ENCODE measurements at regions of chr16 and their contacts with region 1.

Region 1: GRCh38 chr16:2429034-2429770 is at the start of gene CCNF:
- DNase-seq: peak; percentile 98
- H3K4me3 ChIP-seq: peak within 1 kb of the TSS; percentile 70 to 93 (median 78)
- H3K27ac ChIP-seq: peak within 1 kb of the TSS; percentile 76 to 82 (median 80)
- H3K4me1 ChIP-seq: peaks cover 4 to 20% (median 18%) of the 10 kb centered on the region in 4 donors
- H3K27me3 ChIP-seq: no peaks in the 10 kb centered on the region
- CTCF ChIP-seq: no peak
- EP300 ChIP-seq: no peak
- POLR2A ChIP-seq: peak; percentile 20
- total RNA-seq, gene CCNF: 0.75 to 24.9 (median 2.3) TPM

Region 2: GRCh38 chr16:2340564-2341455 is 88.4 kb before region 1 on chr16 and contains the start of gene ABCA3:
- in situ Hi-C with region 1: no loop called
- intact Hi-C with region 1: loop called (anchors 5 kb)
- DNase-seq: peak; percentile 95
- H3K4me3 ChIP-seq: peak within 1 kb of the TSS; percentile 47 to 67 (median 62)
- H3K27ac ChIP-seq: peak within 1 kb of the TSS; percentile 8 to 78 (median 64)
- H3K4me1 ChIP-seq: peaks cover 0 to 23% (median 14%) of the 10 kb centered on the region in 4 donors
- H3K27me3 ChIP-seq: peaks cover 47% of the 10 kb centered on the region
- CTCF ChIP-seq: peak; percentile 98 to 100 (median 99)
- EP300 ChIP-seq: no peak
- POLR2A ChIP-seq: no peak
- total RNA-seq, gene ABCA3: 3.4 to 8.6 (median 3.7) TPM

Region 3: GRCh38 chr16:2398520-2398919 is 30.7 kb before region 1 on chr16:
- in situ Hi-C with region 1: no loop called
- intact Hi-C with region 1: no loop called
- DNase-seq: no peak
- H3K4me3 ChIP-seq: no peak overlapping the region
- H3K27ac ChIP-seq: no peak overlapping the region
- H3K4me1 ChIP-seq: no peaks in the 10 kb centered on the region
- H3K27me3 ChIP-seq: no peaks in the 10 kb centered on the region
- CTCF ChIP-seq: no peak
- EP300 ChIP-seq: no peak
- POLR2A ChIP-seq: no peak

Region 4: DNA sequence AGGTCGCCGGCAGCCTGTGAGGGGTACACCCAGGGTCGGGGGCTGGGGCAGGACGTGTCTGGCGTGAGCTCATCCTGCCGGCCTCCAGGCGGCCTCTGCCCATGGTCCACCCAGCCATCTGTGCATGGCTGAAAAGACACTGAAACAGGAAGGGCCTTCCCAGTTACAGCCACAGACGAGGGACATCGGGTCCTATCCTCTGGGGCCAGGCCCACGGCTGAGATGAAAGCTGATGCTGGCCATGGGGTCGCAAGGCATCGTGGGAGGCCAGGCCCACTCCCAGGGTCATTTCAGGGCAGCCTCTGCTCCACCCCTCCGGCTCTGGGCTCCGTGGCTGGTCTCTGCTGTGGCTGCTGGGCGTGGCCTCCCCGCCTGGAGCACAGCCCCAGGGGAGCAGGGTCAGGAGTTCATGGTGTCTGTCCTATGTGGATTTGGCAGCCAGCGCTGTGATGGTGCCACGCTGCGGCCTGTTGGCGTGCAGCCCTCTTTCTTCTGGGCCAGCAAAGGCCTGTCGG is 68.0 kb after region 1 on chr16:
- in situ Hi-C with region 1: loop called in 1 of 4 experiments (anchors 10 kb)
- intact Hi-C with region 1: no loop called
- DNase-seq: no peak
- H3K4me3 ChIP-seq: no peak overlapping the region
- H3K27ac ChIP-seq: no peak overlapping the region
- H3K4me1 ChIP-seq: peaks cover 6 to 29% (median 11%) of the 10 kb centered on the region in 4 donors
- H3K27me3 ChIP-seq: no peaks in the 10 kb centered on the region
- CTCF ChIP-seq: no peak
- EP300 ChIP-seq: no peak
- POLR2A ChIP-seq: no peak

Region 5: GRCh38 chr16:2586241-2586640 is 157.0 kb after region 1 on chr16:
- in situ Hi-C with region 1: loop called in 1 of 4 experiments (anchors 25 kb)
- intact Hi-C with region 1: no loop called
- DNase-seq: no peak
- H3K4me3 ChIP-seq: no peak overlapping the region
- H3K27ac ChIP-seq: no peak overlapping the region
- H3K4me1 ChIP-seq: peaks cover 0 to 6% (median 3%) of the 10 kb centered on the region in 4 donors
- H3K27me3 ChIP-seq: no peaks in the 10 kb centered on the region
- CTCF ChIP-seq: no peak
- EP300 ChIP-seq: no peak
- POLR2A ChIP-seq: no peak

Measured in transverse colon (tissue), 4 donors.